Transverse colon (tissue), 4 donors: ENCODE measurements at regions of chr3 and their contacts with region 1.

Region 1: DNA sequence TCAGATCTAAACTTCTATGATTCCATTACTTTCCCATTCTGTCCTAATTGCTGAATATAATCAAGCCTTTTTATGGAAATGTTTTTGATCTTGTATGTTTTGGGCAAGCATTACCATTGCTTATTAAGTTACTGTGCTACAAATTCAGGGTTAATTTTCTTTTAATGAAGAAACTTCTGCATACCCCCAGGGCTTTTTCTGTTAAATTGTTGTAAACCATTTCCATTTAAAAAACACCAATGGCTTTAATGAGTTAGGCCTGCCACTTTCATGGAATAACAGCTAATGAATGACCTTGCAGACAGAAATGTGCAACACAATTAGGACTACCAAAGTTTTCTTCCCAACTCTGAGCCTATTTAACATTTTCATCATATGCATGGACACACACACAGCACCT is 150.0 kb downstream of the DIPK2A start:
- DNase-seq: no peak
- H3K4me3 ChIP-seq: no peak overlapping the region
- H3K27ac ChIP-seq: no peak overlapping the region
- H3K4me1 ChIP-seq: no peaks in the 10 kb centered on the region
- H3K27me3 ChIP-seq: no peaks in the 10 kb centered on the region
- CTCF ChIP-seq: no peak
- EP300 ChIP-seq: no peak
- POLR2A ChIP-seq: no peak

Region 2: DNA sequence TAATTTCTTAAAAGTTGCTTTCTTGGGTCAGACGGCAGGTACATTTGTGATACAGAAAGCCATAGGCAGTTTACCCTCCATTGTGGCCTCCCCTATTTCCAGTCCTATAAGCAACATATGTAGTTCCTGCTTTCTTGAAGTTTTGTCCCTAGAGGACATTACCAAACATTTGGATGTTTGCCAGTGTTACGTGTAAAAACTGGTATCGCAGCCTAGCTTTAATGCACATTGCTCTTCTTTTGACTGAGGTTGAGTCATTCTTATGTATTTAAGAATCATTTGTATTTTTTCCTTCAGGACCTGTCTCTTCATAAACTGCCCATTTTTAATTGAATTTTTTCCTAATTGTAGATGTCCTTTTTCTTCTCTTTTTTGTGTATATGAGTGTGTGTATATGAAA is 35.7 kb before region 1 on chr3:
- in situ Hi-C with region 1: no loop called
- intact Hi-C with region 1: loop called (anchors 1 kb)
- DNase-seq: no peak
- H3K4me3 ChIP-seq: no peak overlapping the region
- H3K27ac ChIP-seq: no peak overlapping the region
- H3K4me1 ChIP-seq: no peaks in the 10 kb centered on the region
- H3K27me3 ChIP-seq: no peaks in the 10 kb centered on the region
- CTCF ChIP-seq: no peak
- EP300 ChIP-seq: no peak
- POLR2A ChIP-seq: no peak